Left colon (tissue), 2 donors: ENCODE measurements at regions of chr2 and their contacts with region 1.

Region 1: DNA sequence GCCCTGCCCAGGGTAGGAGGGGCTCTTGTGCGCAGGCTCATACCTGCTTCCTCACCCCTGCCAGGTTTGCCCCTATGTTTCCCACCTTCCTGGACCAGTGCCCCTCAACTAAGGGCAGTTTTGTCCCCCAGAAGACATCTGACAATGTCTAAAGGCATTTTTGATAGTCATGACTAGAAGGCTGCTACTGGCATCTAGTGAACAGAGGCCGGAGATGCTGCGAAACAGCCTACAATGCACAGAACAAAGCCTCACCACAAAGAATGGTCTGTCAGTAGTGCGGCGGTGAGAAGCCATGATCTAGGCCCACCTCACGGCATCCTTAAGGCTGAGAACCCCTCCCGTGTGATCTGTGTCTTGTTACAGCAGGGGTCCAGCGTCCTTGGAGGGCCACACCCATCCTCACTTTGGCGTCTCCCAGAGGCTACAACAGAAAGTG is 96.0 kb downstream of the TMEM17 start:
- DNase-seq: no peak
- ATAC-seq: peak; percentile 50

Region 2: GRCh38 chr2:61922714-61923113 is 487.3 kb before region 1 on chr2:
- intact Hi-C with region 1: loop called in 1 of 2 experiments (anchors 2 kb)
- DNase-seq: no peak
- ATAC-seq: no peak

Region 3: DNA sequence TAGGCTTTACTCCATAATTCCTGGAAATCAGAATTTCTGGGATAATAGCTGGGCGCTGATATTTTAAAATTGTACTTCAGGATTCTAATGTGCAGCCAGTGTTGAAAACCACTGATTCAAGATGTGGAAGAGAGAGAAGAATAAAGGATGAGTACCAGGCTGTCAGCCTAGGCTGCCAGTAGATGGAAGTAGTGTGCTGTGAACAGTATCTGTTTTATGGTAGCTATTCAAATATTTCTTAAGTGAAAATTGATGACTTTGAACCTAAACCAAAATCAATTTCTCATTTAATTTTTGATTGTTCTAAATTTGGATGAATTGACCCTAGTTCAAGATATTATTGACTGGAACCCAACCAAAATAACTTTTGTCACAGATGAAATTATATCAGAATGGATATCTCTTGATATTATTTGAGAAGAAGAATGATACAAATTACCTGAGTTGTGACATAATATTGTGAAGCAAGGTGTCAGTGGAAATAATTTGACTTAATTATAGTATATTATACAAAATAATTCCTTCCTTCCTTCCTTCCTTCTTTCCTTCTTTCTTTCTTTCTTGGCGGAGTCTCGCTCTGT is 416.5 kb before region 1 on chr2:
- intact Hi-C with region 1: loop called (anchors 5 to 10 kb)
- DNase-seq: peak in 1 of 2 donors; percentile 19
- ATAC-seq: peak; percentile 87

Region 4: DNA sequence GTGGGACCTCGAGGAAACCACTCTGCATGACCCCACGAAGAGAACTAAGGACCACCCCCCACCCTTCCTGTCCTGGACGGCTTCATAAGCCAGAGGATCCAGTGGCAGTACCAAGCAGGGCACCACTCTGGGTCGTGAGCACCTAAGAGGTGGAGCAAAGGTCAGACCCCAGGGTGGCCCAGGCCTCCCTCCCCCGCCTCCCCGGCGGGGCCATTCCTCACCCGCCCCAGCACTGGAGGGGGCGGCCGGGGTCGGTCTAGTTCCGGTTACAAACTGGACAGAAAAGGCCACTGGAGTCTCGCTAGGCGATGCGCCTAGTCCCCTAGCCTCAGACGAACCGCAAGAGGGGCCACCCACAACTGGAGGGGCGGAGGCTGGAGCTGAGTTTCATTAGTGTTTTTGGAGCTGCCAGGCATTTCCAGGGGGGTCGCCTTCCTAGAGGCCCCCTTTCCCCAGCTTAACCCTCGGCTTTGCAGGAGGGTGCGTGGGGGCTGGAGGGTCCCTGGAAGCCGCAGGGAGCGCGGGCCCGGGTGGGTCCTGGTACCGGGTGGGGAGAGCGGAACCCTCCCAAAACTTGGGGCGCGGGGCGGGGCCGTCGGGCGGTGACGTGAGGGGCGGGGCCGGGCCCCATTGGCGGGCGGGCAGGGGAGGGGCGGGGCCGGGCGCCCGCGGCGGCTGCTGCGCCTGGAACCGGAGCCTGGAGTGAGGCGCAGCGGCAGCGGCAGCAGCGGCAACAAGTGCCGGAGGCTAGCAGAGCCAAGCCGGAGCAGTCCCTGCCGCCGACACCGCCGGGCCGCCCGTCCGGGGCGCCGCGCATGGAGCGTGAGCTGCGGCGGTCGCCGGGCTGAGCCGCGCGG is 214.4 kb before region 1 on chr2 and contains the start of gene B3GNT2:
- intact Hi-C with region 1: loop called in 1 of 2 experiments (anchors 5 kb)
- DNase-seq: peak; percentile 75 to 89
- ATAC-seq: peak; percentile 78
- total RNA-seq, gene B3GNT2: 27.6 to 49.5 TPM